ENCODE measurements at regions of chr10 and their contacts with region 1.

Region 1: GRCh38 chr10:659688-660141 is 29.8 kb downstream of the DIP2C start:
- DNase-seq: no peak

Region 2: GRCh38 chr10:624605-625332 is 34.9 kb before region 1 on chr10:
- intact Hi-C with region 1: no loop called
- DNase-seq: peak; percentile 92

Region 3: GRCh38 chr10:670990-671389 is 11.3 kb after region 1 on chr10:
- intact Hi-C with region 1: loop called in 1 of 2 experiments (anchors 1 kb)
- DNase-seq: peak; percentile 74

Region 4: GRCh38 chr10:909831-910230 is 250.1 kb after region 1 on chr10:
- intact Hi-C with region 1: no loop called
- DNase-seq: no peak